Mucosa of descending colon (tissue), 3 donors: ENCODE measurements at regions of chr7 and their contacts with region 1.

Region 1: DNA sequence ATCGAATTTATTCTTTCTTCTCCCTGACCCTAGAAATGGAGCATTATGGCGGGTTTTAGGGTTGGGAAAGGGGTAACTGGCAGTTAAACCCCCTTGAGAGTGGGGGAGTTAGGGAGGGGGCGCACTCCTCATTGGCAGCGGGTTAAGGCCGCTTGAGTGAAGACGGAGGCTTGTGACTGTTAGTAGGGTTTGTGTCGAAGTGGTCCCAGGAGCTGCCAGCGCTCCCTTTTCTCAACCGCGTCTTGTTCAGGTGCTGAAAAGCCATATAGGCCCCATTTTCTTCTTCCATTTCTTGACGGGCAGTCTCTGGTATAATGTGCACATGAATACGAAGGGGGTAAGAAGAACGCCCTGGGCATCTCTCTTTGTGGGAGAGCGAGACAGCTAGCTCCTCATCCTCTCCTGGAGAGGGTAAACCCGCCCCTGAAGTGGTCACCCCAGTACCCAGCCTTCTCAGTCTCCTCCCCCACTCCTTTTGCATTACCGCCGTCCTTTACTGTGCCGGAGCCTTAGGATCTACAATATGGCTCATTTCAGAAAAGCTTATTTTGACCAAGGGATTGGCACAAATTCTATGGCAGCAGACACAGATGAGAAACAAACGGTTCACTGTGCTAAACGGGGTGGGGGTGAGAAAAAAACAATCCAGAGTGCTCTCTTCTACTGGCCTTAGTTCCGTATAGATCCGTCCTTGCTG is 836 bp downstream of the KMT2E start:
- DNase-seq: peak; percentile 60 to 80 (median 69)
- ATAC-seq: peak; percentile 19
- H3K4me3 ChIP-seq: peak overlapping the region; percentile 91
- H3K4me1 ChIP-seq: peaks cover 31% of the 10 kb centered on the region
- CTCF ChIP-seq: no peak

Region 2: GRCh38 chr7:104983578-104984539 is 31.0 kb before region 1 on chr7:
- intact Hi-C with region 1: loop called in 1 of 2 experiments (anchors 5 kb)
- DNase-seq: peak; percentile 91 to 94 (median 91)
- ATAC-seq: peak; percentile 91
- H3K4me3 ChIP-seq: peak overlapping the region; percentile 33
- H3K4me1 ChIP-seq: peaks cover 61% of the 10 kb centered on the region
- CTCF ChIP-seq: no peak